ENCODE measurements at regions of chr18 and their contacts with region 1.

Region 1: DNA sequence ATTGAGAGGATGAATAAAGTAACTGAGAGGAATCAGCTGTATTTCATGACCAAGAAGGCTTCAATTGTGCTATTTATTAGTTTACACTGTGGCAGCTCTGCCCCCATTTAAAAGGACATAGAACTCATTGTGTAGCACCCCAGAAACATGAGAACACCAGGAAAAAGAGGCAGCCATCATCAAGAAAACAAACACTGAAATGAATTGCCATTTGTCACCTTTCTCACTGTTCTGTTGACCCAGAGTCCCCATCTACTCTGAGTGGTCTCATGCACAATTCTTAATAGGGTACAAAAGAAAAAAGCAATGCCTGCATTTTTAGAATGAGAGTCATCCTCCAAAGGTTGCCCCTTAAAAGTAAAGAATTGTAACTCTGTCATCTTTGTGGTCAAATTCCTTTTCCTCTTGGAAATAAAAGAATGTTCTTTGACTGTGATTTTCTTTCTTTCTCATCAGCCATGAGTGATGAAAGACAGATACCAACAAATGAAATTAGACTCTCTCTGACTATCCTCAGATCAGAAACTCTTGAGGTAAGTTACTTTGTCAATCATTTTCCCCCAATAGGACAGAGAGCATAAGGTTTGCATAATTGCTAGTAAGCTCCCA is 1941.9 kb upstream of the PIK3C3 start:
- DNase-seq: no peak
- H3K4me3 ChIP-seq: no peak overlapping the region
- H3K27ac ChIP-seq: peak overlapping the region in 51 of 59 donors; percentile 5 to 88 (median 59)
- H3K27me3 ChIP-seq: no peaks in the 10 kb centered on the region
- CTCF ChIP-seq: no peak

Region 2: GRCh38 chr18:39841482-39842365 is 171.4 kb before region 1 on chr18:
- intact Hi-C with region 1: loop called in 1 of 2 experiments (anchors 5 kb)
- DNase-seq: peak; percentile 60 to 84 (median 81)
- H3K4me3 ChIP-seq: peak overlapping the region; percentile 17 to 75 (median 59)
- H3K27ac ChIP-seq: peak overlapping the region in 52 of 59 donors; percentile 2 to 83 (median 60)
- H3K27me3 ChIP-seq: no peaks in the 10 kb centered on the region
- CTCF ChIP-seq: peak in 54 of 56 donors; percentile 29 to 73 (median 58)

Region 3: GRCh38 chr18:39959839-39960238 is 53.3 kb before region 1 on chr18:
- intact Hi-C with region 1: loop called in 1 of 2 experiments (anchors 10 kb)
- DNase-seq: no peak
- H3K4me3 ChIP-seq: no peak overlapping the region
- H3K27ac ChIP-seq: no peak overlapping the region
- H3K27me3 ChIP-seq: no peaks in the 10 kb centered on the region
- CTCF ChIP-seq: no peak

Measured in dorsolateral prefrontal cortex (tissue), 120 donors.